ENCODE measurements at regions of chr17 and their contacts with region 1.

Region 1: GRCh38 chr17:76726231-76726775 is at the start of gene JMJD6:
- DNase-seq: peak; percentile 88 to 99 (median 97)

Region 2: GRCh38 chr17:76710863-76711611 is 15.3 kb before region 1 on chr17 and contains the start of gene MXRA7:
- intact Hi-C with region 1: loop called (anchors 2 kb)
- DNase-seq: peak in 39 of 42 donors; percentile 49 to 89 (median 77)

Region 3: DNA sequence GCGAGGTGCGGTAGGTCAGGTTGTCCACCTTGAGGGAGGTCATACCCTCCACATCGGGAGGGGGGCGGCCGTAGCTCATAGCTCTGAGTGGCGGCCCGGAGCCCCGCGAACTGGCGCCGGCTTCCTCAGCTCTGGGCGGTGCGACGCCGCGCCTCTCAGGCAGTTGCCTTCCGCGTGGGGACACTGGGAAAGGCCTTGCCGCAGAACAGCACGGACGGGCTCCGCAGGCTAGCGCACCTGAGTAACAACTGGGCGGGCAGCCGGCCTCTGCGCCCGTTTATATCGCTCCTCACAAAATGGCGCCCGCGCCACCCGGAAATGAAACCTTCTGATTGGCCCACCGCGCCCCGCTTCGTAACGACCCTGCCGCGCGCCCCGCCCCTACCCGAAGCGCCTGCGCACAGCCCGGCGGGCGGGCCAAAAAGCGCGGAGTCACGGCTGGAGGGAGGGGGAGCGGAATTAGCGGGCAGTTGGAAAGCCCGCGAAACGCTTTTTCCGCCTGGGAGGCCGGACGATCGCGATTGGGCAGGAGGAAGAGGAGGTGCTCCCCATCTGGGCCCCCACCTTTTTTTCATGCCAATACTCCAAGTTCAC is 10.9 kb after region 1 on chr17 and contains the start of gene SRSF2:
- intact Hi-C with region 1: loop called (anchors 1 kb)
- DNase-seq: peak; percentile 96 to 99 (median 98)

Region 4: DNA sequence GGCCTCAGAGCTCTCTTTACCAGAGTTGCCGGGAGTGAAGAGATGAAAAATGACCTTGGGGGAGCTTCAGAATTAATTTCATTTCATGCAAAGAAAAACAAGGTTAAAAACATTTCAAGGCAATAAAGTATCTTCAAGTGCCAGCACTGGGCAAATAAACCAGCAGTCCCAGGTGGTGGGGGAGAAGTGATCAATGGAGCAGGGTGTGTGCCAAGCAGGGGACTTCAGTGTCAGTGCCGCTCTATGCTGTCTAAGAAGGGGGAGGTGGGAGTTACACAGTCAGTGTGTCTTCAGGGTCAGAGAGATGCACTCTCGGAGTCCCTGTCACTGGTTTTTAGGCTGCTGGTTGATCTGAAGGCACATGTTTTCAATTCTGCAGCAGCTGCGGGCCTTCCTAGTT is 84.7 kb after region 1 on chr17:
- intact Hi-C with region 1: no loop called
- DNase-seq: no peak

Region 5: DNA sequence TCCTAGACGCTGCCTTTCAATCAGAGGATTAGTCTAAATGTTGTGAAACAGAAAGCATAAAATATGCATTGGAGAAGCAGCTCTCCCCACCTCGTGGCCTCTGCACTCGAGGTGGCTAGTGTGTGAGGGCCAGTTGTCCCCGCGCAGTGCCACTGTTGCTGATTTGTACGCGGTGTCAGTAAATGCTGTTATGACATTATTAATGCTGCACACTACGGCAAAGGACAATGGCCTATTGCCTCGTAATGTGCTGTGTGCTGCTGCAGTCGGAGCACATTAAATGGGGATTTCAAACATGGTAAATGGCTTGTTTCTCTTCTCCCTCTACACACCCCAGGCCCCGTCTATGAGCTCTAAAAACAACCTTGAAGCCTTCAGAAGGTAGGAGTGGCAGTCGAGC is 136.2 kb after region 1 on chr17:
- intact Hi-C with region 1: no loop called
- DNase-seq: no peak

Measured in head of caudate nucleus (tissue), 42 donors.